B cell (primary cell): ENCODE measurements at regions of chr1 and their contacts with region 1.

Region 1: DNA sequence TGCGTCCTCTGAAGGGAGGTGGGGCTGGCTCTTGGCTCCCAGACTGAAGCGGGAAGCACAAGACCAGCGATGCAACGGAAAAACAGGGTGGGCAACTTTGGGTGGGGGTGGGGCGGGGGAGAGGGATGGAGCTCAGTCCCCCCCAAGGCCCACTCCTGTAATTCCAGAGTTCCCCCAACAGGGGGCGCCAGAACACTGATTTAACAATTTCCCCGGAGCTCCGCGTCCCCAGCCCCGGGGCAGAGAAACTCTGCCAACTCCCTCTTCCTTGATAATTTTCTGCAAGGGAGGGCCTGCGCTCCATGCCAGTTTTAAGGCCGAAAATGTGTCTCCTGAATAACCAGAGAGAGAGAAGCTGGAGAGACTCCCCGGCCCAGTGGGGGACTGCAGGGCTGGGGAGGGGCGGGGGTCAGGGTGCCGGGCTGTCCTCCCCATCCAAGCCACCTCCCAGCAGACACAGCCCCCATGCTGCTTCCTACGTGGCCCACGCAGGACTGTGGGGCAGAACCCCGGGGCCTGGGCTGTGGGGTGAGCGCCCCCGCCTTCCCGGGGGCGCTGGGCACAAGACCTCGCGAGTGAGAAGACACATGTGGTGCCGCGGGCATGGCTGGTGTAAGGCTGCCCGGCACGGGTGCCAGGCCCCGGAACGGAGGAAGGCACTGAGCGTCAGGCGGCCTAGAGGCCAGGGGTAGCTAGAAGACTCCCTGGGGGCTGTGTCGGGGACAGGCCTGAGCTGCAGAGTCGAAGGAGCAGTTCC is 51.4 kb downstream of the KIF21B start:
- DNase-seq: peak; percentile 69
- ATAC-seq: peak; percentile 49
- H3K4me3 ChIP-seq: no peak overlapping the region
- H3K4me3 Mint-ChIP-seq: no peak overlapping the region
- H3K27ac ChIP-seq: no peak overlapping the region
- H3K27ac Mint-ChIP-seq: no peak overlapping the region
- H3K4me1 ChIP-seq: no peaks in the 10 kb centered on the region
- H3K4me1 Mint-ChIP-seq: peaks cover 11% of the 10 kb centered on the region
- H3K27me3 ChIP-seq: no peaks in the 10 kb centered on the region
- H3K27me3 Mint-ChIP-seq: no peaks in the 10 kb centered on the region
- CTCF ChIP-seq: peak; percentile 99

Region 2: DNA sequence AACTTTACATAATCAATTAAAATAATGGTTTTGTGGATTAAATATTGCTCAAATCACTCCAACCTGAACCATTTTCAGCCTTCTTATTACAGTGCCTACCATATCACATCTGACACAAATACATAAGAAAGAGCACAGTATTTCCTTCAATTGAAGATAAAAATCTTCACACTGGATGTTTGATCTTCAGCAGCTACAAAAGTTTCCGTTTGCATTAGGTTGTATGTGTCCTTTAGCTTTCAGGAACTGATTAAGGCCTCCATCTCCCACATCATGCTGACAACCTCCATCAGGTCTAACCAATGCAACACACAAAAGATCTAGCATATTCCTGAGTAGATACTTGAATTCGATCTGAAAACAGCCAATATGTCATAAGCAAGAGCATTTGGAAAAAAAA is 1139.7 kb before region 1 on chr1:
- CTCF ChIA-PET with region 1: no interaction called
- POLR2A ChIA-PET with region 1: no interaction called
- intact Hi-C with region 1: no loop called
- DNase-seq: no peak
- ATAC-seq: no peak
- H3K4me3 ChIP-seq: no peak overlapping the region
- H3K4me3 Mint-ChIP-seq: no peak overlapping the region
- H3K27ac ChIP-seq: no peak overlapping the region
- H3K27ac Mint-ChIP-seq: no peak overlapping the region
- H3K4me1 ChIP-seq: no peaks in the 10 kb centered on the region
- H3K4me1 Mint-ChIP-seq: no peaks in the 10 kb centered on the region
- H3K27me3 ChIP-seq: peaks cover 0 to 6% (median 2%) of the 10 kb centered on the region in 4 experiments
- H3K27me3 Mint-ChIP-seq: peaks cover 37% of the 10 kb centered on the region
- CTCF ChIP-seq: no peak

Region 3: GRCh38 chr1:200888349-200888838 is 83.7 kb before region 1 on chr1:
- CTCF ChIA-PET with region 1: interaction called, 11 read pairs
- POLR2A ChIA-PET with region 1: no interaction called
- intact Hi-C with region 1: no loop called
- DNase-seq: peak; percentile 69
- ATAC-seq: peak; percentile 94
- H3K4me3 ChIP-seq: peak overlapping the region in 2 of 5 experiments; percentile 6 to 23
- H3K4me3 Mint-ChIP-seq: peak overlapping the region; percentile 59
- H3K27ac ChIP-seq: peak overlapping the region in 1 of 2 donors; percentile 4
- H3K27ac Mint-ChIP-seq: peak overlapping the region; percentile 63
- H3K4me1 ChIP-seq: peaks cover 42 to 51% of the 10 kb centered on the region in 2 donors
- H3K4me1 Mint-ChIP-seq: peaks cover 52% of the 10 kb centered on the region
- H3K27me3 ChIP-seq: peaks cover 0 to 30% (median 12%) of the 10 kb centered on the region in 4 experiments
- H3K27me3 Mint-ChIP-seq: peaks cover 19% of the 10 kb centered on the region
- CTCF ChIP-seq: no peak

Region 4: GRCh38 chr1:201042779-201043461 is 70.8 kb after region 1 on chr1:
- CTCF ChIA-PET with region 1: interaction called, 303 read pairs
- POLR2A ChIA-PET with region 1: interaction called, 4 read pairs
- intact Hi-C with region 1: loop called (anchors 1 kb)
- DNase-seq: peak; percentile 81
- ATAC-seq: peak; percentile 91
- H3K4me3 ChIP-seq: no peak overlapping the region
- H3K4me3 Mint-ChIP-seq: no peak overlapping the region
- H3K27ac ChIP-seq: no peak overlapping the region
- H3K27ac Mint-ChIP-seq: peak overlapping the region; percentile 1
- H3K4me1 ChIP-seq: peaks cover 0 to 2% of the 10 kb centered on the region in 2 donors
- H3K4me1 Mint-ChIP-seq: peaks cover 3% of the 10 kb centered on the region
- H3K27me3 ChIP-seq: peaks cover 0 to 3% (median 1%) of the 10 kb centered on the region in 4 experiments
- H3K27me3 Mint-ChIP-seq: peaks cover 3% of the 10 kb centered on the region
- CTCF ChIP-seq: peak; percentile 93

Region 5: DNA sequence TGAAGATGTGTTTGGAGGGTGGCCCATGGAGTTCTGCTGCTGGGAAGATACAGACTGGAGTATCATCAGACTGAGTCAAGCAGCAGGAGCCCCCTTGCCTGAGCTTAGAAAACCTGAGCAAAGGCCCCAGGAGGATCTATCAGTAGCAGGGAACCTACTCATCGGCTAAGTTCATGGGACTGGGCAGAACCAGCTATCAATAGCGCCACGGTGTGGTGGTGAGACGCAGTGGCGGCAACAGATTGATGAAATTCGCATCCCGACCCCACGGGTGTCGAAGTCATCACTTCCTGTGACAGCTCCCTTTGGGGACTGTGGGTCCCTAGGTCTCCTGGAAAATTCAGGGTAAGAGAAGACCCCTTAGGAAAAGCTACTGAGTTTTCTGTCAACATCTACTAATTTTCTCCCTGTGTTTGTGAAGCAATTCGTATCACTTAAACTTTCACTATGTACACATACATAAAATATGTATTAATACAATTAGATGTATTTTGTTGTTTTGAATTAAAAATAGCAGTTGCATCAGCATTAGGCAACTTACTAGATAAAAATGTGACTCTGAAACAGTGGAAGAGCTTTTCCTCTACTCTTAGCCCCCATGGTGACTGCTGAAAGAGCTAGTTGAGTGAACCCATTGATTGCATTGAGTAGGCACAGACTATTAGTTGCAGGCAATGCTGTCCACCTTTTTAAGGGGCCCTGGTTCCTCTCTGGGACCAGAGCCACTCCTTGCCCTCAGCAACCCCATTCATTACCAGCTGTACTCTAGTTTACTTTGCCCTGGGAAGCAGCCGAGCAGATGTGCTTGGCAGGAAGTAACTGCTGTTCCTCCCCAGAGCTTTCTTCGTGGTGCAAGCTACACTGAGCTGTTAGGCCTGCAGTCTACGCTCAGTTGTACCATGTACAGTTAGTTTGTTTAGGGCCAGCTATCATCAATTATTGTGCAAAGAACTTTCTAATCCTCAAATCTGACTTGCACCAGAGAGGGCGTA is 147.4 kb after region 1 on chr1:
- CTCF ChIA-PET with region 1: interaction called, 46 read pairs
- POLR2A ChIA-PET with region 1: no interaction called
- intact Hi-C with region 1: no loop called
- DNase-seq: peak; percentile 45
- ATAC-seq: no peak
- H3K4me3 ChIP-seq: no peak overlapping the region
- H3K4me3 Mint-ChIP-seq: no peak overlapping the region
- H3K27ac ChIP-seq: no peak overlapping the region
- H3K27ac Mint-ChIP-seq: no peak overlapping the region
- H3K4me1 ChIP-seq: peaks cover 3 to 11% of the 10 kb centered on the region in 2 donors
- H3K4me1 Mint-ChIP-seq: peaks cover 8% of the 10 kb centered on the region
- H3K27me3 ChIP-seq: peaks cover 0 to 19% (median 5%) of the 10 kb centered on the region in 4 experiments
- H3K27me3 Mint-ChIP-seq: peaks cover 29% of the 10 kb centered on the region
- CTCF ChIP-seq: peak; percentile 69